ENCODE measurements at regions of chr11 and their contacts with region 1.

Region 1: GRCh38 chr11:46916286-46917108 is 1.9 kb downstream of the LRP4 start:
- DNase-seq: peak; percentile 77

Region 2: DNA sequence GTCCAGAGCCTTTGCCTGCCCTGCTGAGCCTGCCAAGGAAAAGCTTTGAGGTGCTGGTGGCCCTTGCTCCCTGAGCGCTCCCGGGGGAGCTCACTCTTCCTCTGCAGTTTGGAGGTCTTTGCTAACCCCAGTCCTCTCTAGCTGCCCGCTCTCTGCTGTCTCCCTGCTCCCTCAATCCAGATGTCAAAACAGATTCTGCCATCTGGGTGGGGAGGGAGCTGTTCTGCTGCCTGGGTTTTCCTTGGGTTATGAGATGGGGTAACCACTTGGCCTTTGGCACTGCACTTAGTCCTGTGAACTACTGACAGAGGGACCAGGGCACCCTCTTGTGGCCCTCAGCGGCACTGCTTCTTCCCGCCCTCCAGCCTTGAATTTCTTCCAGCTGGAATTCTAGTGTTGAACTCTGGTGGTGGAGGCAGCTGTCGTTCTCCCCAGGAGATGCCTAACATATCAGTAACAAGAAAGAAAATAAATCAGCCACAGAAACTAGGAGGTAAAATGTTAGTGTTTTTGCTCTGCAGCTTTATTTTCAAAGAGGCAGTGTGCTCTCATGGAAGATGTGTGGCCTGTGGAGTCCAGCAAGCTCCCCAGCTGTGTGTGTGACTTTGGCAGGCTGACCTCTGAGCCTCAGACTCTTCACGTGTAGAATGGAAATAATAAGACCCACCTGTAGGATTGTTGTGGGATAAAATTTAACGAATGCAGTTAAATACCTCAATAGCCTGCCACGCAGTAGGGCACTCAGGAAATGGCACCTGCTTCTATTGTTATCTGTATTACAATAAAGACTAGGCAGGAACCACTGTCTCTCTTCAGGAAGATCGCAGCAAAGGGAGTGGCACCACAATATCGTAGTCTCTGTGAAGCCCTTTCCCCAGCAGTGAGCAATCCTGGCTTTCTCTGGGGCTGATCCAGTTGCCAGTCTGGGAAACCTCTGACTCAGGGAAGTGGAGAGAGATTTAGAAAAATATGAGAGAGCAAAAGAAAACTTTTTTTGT is 236.8 kb after region 1 on chr11:
- CTCF ChIA-PET with region 1: interaction called, 12 read pairs
- POLR2A ChIA-PET with region 1: interaction called, 3 read pairs
- DNase-seq: peak; percentile 82